Right ventricle myocardium inferior (tissue), 1 donor: ENCODE measurements at regions of chr2 and their contacts with region 1.

Region 1: DNA sequence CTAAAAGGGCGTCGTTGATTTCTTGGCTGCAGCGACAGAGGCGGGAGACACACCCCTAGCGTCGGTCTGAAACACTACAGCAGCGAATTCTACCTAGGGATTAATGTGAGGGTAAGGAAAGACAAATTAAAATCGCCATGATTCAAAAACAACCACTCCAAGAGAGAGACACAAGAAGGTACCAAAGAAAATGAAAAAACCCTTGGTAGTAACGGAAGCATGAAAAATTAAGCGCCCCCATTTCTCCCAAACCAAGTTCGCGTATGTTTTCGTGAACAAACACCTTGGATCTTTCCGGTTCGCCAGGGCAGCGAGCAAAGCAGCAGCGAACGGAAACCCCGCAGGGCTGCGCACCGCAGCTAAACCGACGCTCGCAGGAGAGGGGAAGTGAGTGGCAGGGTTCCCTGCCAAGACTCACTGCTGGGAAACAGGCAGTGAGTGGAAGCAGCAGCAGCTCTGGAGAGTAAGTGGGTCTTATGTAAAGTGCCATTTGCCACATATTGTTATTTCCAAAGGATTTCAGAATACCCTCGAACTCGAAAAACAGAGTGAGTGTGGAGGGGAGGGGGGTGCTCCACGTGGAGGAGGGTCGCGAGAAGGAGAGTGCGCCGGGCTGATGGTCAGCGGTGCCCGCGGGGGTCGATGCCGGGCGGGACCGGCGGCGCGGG is 1.0 kb downstream of the PPP3R1 start:
- DNase-seq: peak; percentile 80
- ATAC-seq: peak; percentile 32

Region 2: GRCh38 chr2:66966631-66967030 is 1284.7 kb before region 1 on chr2:
- intact Hi-C with region 1: no loop called
- DNase-seq: no peak
- ATAC-seq: no peak

Region 3: GRCh38 chr2:68121873-68122679 is 129.2 kb before region 1 on chr2:
- intact Hi-C with region 1: loop called (anchors 2 kb)
- DNase-seq: peak; percentile 93
- ATAC-seq: peak; percentile 64

Region 4: GRCh38 chr2:68157402-68158133 is 93.8 kb before region 1 on chr2 and contains the start of gene PNO1:
- intact Hi-C with region 1: loop called (anchors 1 kb)
- DNase-seq: peak; percentile 97
- ATAC-seq: peak; percentile 98
- total RNA-seq, gene PNO1: 7.1 TPM

Region 5: DNA sequence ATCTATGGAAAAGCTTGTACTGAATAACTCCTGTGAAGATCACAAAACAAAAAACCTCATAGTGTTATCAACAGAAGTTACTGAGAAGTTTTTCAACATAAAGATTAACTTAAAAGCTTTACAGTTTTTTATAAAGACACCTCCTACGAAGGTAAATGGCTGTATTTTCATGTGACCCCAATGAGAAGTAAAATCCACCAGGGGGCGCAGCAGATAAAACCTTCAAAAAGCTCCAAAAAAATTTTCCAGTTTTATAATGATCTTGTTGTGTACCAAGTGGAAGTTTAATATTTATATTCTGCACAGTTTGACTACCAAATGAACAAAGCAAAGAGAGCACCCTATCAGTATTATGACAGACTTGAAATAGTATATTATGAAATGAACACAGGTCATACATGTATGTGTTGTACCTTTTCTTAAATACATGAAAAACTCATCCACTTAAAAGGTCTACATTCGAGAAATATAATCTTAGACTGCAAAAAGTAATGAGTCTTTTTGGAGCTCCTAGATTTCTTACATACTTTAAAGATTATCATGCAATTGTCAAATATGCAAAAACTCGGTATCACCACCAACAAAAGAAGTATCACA is 55.1 kb before region 1 on chr2:
- intact Hi-C with region 1: loop called (anchors 2 kb)
- DNase-seq: no peak
- ATAC-seq: peak; percentile 34

Region 6: GRCh38 chr2:68263632-68264031 is 12.3 kb after region 1 on chr2:
- intact Hi-C with region 1: no loop called
- DNase-seq: no peak
- ATAC-seq: no peak

Region 7: DNA sequence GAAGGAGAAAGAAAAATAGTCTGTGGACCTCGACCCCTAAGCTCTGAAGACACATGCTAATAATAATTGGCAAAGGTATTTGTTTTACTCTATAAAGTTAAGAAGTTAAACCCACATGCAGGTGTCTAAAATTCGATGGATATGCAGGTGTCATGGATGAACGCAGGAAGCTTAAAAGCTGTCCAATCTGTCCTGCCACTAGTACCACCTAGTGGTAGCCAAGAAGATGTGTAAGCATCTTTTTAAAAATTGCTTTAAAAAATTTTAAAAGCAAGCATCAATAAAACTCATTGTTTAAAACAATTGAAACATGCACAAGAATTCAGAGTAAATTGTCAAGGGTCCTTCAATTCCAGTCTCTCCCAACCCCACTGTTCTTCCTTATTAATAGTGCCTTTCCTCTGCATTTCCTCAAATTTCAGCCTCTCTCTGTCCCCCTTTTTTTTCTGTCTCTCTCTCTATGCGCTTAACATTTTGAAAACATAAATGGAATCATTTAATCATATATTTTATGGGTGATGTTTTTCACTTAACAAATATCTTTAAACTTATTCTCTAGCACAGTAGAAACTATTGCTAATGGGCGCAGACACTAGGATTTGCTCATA is 31.6 kb after region 1 on chr2:
- intact Hi-C with region 1: loop called (anchors 5 kb)
- DNase-seq: no peak
- ATAC-seq: no peak

Region 8: DNA sequence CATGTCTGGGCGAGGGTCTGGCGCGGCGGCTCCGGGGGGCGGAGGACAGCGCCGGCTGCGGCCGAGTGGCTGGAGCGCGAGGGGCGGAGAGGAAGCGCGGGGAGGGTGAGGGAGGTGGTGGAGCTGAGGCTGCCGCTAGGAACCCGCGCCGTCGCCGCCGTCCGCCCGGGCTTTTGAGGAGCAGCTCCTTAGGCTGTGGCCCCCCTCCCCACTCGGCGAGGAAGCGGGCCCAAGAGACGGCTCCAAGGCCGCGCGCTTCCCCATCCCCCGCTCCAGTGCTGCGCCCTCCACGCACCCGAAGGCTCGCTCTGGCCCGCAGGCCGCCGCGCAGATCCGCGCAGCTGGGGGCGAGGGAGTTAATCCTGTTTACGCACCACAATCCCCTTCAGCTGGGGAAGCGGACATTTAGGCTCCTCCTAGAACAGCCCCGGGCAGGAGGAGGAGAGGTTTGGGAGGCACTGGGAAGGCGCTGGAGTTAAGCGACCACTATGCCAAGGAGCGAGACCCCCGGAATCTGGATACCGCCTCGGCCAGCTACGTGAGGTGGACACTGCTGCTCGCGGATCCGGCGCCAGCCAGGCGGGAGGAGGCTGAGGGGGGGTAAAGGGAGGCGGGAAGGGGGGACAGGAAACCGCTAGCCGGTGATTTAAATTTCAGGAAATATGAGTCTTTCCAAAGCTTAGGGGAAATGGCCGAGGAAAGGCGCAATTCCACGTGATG is 68.2 kb after region 1 on chr2 and contains the start of gene CNRIP1:
- intact Hi-C with region 1: loop called (anchors 1 kb)
- DNase-seq: peak; percentile 81
- ATAC-seq: peak; percentile 83
- total RNA-seq, gene CNRIP1: 12.5 TPM

Region 9: DNA sequence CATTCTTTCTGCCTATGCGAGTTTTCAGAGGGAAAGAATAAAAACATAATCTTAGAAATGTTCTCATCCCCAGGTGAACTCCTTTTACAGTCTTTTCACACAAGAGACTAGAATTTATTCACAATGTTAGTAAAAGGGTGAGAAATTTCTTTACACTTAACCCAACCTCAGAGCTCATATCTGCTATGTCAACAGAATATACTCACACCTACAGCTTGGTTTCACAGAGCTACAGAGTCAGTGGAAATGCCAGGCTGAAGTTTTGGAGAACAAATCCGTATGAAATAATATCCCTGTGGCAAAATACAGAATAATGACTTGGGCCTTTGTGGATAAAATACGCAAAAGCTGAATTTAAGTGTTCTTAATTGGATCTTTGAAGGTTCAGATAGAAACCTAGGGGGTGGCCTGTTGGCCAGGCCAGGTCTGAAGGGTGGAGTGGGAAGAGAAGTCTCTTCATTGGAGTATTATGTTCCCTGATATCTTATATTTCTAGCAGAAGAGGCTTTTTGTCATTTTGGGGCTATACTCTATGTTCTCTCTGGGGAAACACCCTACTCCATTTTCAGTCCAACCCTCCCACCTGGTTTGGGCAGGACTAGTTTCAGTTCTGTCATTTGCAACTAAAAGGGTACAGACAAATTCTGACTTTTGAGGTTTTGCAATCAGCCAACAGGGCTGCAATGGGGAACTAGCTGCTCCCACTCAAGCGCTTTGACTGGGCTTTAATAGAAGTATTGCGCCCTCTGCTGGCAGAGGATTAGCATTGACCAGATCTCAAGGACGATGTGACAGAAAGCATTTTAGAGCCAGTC is 190.1 kb after region 1 on chr2:
- intact Hi-C with region 1: loop called (anchors 2 kb)
- DNase-seq: peak; percentile 83
- ATAC-seq: peak; percentile 93